ENCODE measurements at regions of chr3 and their contacts with region 1.

Region 1: DNA sequence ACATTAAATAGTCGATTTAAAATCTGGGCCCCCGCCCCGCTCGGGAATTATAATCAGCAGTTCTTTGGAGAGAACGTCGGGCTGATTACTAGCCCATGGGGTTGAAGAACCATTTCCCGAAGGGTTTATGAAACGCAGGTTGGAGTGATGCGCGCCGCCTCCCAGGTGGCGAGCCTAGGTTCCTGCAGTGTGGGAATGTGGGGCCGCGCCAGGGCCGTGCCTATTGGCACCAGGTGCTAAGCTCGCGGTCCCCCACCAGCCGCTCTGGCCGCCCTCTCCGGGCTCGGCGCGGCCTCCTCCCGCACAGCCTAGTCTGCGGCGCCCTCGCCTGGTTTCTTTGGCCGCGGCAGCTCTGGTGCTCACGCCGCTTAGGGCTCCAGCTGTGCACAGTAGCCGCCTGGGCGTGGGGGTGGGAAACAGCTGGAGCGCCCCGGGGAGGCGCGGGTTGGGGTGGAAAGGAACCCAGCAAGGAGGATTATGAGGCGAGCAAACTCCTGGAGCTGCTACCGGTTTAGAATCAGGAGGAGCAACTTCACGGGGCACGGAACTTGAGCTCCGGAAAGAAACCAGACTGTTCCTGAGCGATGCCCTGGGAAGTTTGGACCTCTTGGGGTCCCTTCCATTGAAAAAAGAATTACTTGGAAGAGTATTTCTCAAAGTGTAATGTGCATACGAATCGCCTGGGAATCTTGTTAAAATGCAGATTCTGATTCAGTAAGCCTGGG is 5.6 kb upstream of the MECOM start:
- DNase-seq: peak; percentile 73 to 82
- ATAC-seq: peak; percentile 97 to 99 (median 98)
- H3K4me3 ChIP-seq: peak overlapping the region; percentile 15 to 73 (median 56)
- H3K27ac ChIP-seq: peak overlapping the region in 9 of 10 donors; percentile 41 to 77 (median 69)
- H3K4me1 ChIP-seq: peaks cover 0 to 30% (median 21%) of the 10 kb centered on the region in 9 donors
- H3K27me3 ChIP-seq: peaks cover 0 to 86% (median 64%) of the 10 kb centered on the region in 7 donors
- CTCF ChIP-seq: peak; percentile 63 to 95 (median 85)

Region 2: GRCh38 chr3:168865022-168865551 is 804.0 kb before region 1 on chr3:
- intact Hi-C with region 1: loop called in 7 of 10 experiments (anchors 2 to 10 kb)
- DNase-seq: no peak
- ATAC-seq: no peak
- H3K4me3 ChIP-seq: peak overlapping the region in 5 of 10 donors; percentile 13 to 37 (median 23)
- H3K27ac ChIP-seq: peak overlapping the region in 1 of 10 donors; percentile 36
- H3K4me1 ChIP-seq: peaks cover 0 to 4% (median 0%) of the 10 kb centered on the region in 9 donors
- H3K27me3 ChIP-seq: no peaks in the 10 kb centered on the region
- CTCF ChIP-seq: peak; percentile 62 to 84 (median 73)

Region 3: GRCh38 chr3:168952551-168952950 is 716.6 kb before region 1 on chr3:
- intact Hi-C with region 1: loop called in 2 of 10 experiments (anchors 2 to 10 kb)
- DNase-seq: no peak
- ATAC-seq: no peak
- H3K4me3 ChIP-seq: no peak overlapping the region
- H3K27ac ChIP-seq: no peak overlapping the region
- H3K4me1 ChIP-seq: no peaks in the 10 kb centered on the region
- H3K27me3 ChIP-seq: no peaks in the 10 kb centered on the region
- CTCF ChIP-seq: peak in 6 of 9 donors; percentile 20 to 45 (median 30)

Region 4: GRCh38 chr3:169133178-169134161 is 535.6 kb before region 1 on chr3:
- intact Hi-C with region 1: loop called in 4 of 10 experiments (anchors 5 kb)
- DNase-seq: no peak
- ATAC-seq: peak in 7 of 8 donors; percentile 33 to 83 (median 74)
- H3K4me3 ChIP-seq: peak overlapping the region in 2 of 10 donors; percentile 9 to 22
- H3K27ac ChIP-seq: peak overlapping the region in 7 of 10 donors; percentile 32 to 93 (median 59)
- H3K4me1 ChIP-seq: peaks cover 0 to 68% (median 7%) of the 10 kb centered on the region in 9 donors
- H3K27me3 ChIP-seq: peaks cover 0 to 18% (median 4%) of the 10 kb centered on the region in 7 donors
- CTCF ChIP-seq: peak; percentile 12 to 66 (median 48)

Region 5: GRCh38 chr3:169218314-169218983 is 450.7 kb before region 1 on chr3:
- intact Hi-C with region 1: loop called in 7 of 10 experiments (anchors 5 to 10 kb)
- DNase-seq: peak; percentile 12 to 59
- ATAC-seq: peak in 7 of 8 donors; percentile 68 to 92 (median 85)
- H3K4me3 ChIP-seq: no peak overlapping the region
- H3K27ac ChIP-seq: peak overlapping the region in 3 of 10 donors; percentile 13 to 58 (median 19)
- H3K4me1 ChIP-seq: peaks cover 0 to 18% (median 4%) of the 10 kb centered on the region in 9 donors
- H3K27me3 ChIP-seq: no peaks in the 10 kb centered on the region
- CTCF ChIP-seq: peak; percentile 28 to 77 (median 60)

Region 6: DNA sequence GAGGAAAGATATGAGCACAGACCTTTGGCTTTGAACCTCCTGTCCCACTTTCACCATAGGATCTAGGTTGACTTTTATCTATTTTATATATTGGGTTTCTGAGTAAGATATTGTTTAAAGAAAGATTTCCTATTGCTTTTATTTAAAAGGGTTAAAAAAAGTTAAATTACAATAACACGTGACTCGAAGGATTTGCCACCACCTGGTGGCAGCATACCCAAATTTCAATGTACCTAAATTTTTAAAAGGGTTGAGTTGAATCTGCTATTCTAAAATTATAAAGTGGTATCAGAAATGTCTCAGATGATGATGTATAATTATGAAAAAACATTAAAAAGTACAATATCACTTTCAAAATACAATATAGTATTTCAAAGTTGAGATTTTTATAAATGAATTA is 374.0 kb before region 1 on chr3:
- intact Hi-C with region 1: loop called in 5 of 10 experiments (anchors 5 to 10 kb)
- DNase-seq: no peak
- ATAC-seq: no peak
- H3K4me3 ChIP-seq: no peak overlapping the region
- H3K27ac ChIP-seq: no peak overlapping the region
- H3K4me1 ChIP-seq: peaks cover 0 to 18% (median 0%) of the 10 kb centered on the region in 9 donors
- H3K27me3 ChIP-seq: no peaks in the 10 kb centered on the region
- CTCF ChIP-seq: peak in 8 of 9 donors; percentile 17 to 52 (median 36)

Region 7: GRCh38 chr3:169454823-169455222 is 214.3 kb before region 1 on chr3:
- intact Hi-C with region 1: loop called in 2 of 10 experiments (anchors 5 to 10 kb)
- DNase-seq: no peak
- ATAC-seq: peak in 7 of 8 donors; percentile 35 to 89 (median 64)
- H3K4me3 ChIP-seq: no peak overlapping the region
- H3K27ac ChIP-seq: peak overlapping the region in 8 of 10 donors; percentile 9 to 71 (median 56)
- H3K4me1 ChIP-seq: peaks cover 2 to 40% (median 14%) of the 10 kb centered on the region in 9 donors
- H3K27me3 ChIP-seq: no peaks in the 10 kb centered on the region
- CTCF ChIP-seq: no peak

Measured in heart right ventricle (tissue), 16 donors.